Activated T-helper 1 cell treated with anti-CD3 and anti-CD28 coated beads, Interleukin-12 subunit alpha, Interleukin-12 subunit beta, Interleukin-2, Interleukin-4 antibody, amounts not matched to agents 30 ng/mL and 10 ng/mL and 1 ng/mL, durations not matched to agents 14 hours and 24 hours and 36 hours (primary cell): ENCODE measurements at regions of chr19 and their contacts with region 1.

Region 1: GRCh38 chr19:11987405-11988281 is 22.8 kb downstream of the ZNF763 start:
- DNase-seq: peak; percentile 81
- H3K4me3 Mint-ChIP-seq: peak overlapping the region; percentile 98
- H3K27ac Mint-ChIP-seq: peak overlapping the region; percentile 94
- H3K4me1 Mint-ChIP-seq: peaks cover 20% of the 10 kb centered on the region
- H3K27me3 Mint-ChIP-seq: no peaks in the 10 kb centered on the region

Region 2: GRCh38 chr19:11798391-11799330 is 189.0 kb before region 1 on chr19 and contains the start of gene ZNF491:
- intact Hi-C with region 1: loop called (anchors 1 kb)
- DNase-seq: peak; percentile 63
- H3K4me3 Mint-ChIP-seq: peak within 1 kb of the TSS; percentile 78
- H3K27ac Mint-ChIP-seq: no peak within 1 kb of the TSS
- H3K4me1 Mint-ChIP-seq: peaks cover 14% of the 10 kb centered on the region
- H3K27me3 Mint-ChIP-seq: no peaks in the 10 kb centered on the region
- total RNA-seq, gene ZNF491: 0.54 and 0.56 TPM in 2 replicates

Region 3: DNA sequence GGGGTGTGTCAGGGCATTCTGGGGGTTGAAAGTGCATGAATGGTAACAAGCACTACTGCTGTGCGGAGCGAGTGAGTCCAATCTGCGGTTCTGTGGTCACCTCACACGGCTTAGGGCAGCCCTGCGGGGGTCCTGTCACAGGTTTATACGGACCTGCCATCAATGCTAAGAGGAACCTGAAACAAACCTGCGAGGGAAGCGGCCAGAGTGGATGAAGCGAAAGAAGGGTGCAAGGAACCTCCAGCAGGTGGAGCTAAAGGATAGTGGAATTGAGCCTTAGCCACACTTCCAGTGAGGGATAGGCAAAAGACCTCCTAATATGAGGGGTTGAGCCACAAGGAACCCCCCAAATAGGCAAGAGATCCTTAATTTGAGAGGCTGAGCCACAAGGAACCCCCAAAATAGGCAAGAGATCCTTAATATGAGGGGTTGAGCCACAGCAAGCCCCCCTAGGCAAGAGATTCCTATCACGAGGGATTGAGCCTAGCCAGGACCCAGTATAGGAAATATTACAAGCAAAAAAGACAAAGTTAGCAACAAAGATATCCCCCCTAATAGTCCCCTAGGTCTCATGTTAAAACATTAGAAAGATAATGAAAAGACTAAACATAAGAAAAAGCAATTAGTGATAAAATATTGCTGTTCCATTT is 106.4 kb before region 1 on chr19:
- intact Hi-C with region 1: loop called (anchors 1 kb)
- DNase-seq: peak; percentile 43
- H3K4me3 Mint-ChIP-seq: no peak overlapping the region
- H3K27ac Mint-ChIP-seq: no peak overlapping the region
- H3K4me1 Mint-ChIP-seq: peaks cover 4% of the 10 kb centered on the region
- H3K27me3 Mint-ChIP-seq: no peaks in the 10 kb centered on the region

Region 4: DNA sequence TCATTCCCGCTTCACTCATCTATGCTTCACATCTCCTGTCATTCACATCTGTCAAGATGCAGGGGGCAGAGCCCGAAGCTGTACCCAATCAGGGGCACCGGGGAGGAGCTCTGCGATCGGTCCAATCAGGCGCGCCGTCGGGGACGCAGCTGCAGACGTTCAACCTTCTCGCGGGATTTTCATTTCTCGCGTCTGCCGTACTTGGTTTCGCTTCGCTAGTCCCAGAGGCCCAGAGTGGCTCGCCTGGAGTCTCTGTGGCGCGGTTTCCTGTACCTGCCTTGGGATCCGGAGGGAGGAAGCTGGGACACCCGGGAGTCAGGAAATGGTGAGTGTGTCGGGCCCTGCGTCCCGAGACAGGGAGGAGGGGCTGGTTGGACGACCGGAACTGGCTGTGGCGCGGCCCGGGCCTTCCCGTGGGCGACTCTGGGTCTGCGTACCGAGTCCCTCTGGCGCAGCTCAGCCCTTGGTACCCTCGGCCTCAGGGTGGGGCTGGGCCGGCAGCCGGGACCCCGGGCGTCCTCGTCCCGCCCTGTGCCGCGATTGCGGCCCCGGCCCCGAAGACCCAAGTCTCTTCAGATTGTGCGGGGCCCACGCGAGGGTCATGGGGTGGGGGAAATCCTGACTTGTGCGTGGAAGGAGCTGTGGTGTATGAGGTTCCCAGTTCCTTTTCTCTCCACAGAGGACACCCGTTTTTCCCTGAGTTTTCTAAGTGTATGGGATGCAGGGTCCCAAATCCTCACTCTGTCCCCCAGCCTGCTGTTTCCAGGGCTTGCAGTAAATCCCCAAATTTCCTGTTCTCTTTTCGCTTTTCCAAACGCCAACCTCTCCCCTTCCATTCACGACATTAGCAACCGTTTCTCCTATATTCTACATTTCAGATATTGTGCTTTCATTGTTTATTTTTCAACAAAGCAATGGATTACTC is 175.5 kb after region 1 on chr19 and contains the start of gene ZNF136:
- intact Hi-C with region 1: loop called (anchors 5 kb)
- DNase-seq: peak; percentile 90
- H3K4me3 Mint-ChIP-seq: peak within 1 kb of the TSS; percentile 94
- H3K27ac Mint-ChIP-seq: peak within 1 kb of the TSS; percentile 93
- H3K4me1 Mint-ChIP-seq: peaks cover 28% of the 10 kb centered on the region
- H3K27me3 Mint-ChIP-seq: no peaks in the 10 kb centered on the region
- total RNA-seq, gene ZNF136: 10.1 and 10.8 TPM in 2 replicates

Region 5: DNA sequence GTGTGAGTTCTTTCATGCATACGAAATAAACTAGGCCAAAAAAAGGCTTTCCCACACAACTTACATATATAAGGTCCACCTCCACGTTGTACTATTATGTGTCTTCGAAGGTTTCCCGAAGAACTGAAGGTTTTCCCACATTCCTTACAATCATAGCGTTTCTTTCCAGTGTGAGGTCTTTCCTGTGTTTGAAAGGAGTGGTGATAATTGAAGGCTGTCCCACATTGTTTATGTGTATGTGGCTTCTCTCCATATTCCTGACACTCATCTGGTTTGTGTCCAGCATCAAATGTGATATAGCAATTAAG is 363.2 kb after region 1 on chr19:
- intact Hi-C with region 1: no loop called
- DNase-seq: no peak
- H3K4me3 Mint-ChIP-seq: no peak overlapping the region
- H3K27ac Mint-ChIP-seq: no peak overlapping the region
- H3K4me1 Mint-ChIP-seq: no peaks in the 10 kb centered on the region
- H3K27me3 Mint-ChIP-seq: no peaks in the 10 kb centered on the region